ENCODE measurements at regions of chr1 and their contacts with region 1.

Region 1: DNA sequence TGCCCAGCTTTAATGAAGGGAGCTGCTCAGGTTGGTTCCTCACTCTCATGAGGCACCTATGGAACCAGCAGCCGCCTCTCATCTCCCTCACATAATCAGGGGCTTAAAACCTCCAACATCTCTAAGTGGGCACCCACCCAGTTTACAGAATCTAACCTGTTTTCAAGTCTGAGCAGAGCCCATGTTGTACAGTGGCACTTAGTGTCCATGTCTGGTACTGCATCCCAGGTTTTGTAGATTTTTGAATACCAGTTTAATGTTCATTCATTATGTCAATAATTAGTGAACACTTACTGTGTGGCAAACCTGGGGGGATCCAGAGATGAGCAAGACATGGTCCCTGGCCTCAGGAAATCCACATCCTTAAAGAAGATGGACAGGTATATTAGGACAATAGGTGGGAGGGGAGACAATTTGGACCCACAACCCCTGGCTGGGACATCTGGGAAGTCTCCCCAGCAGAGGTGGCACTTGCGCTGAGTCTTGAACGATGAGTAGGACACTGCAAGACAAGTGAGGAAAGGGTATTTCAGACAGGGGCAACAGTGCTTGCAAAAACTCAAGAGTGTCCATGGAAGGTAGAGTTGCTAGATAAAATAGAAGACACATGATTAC is 83.3 kb downstream of the LACTBL1 start:
- H3K4me3 Mint-ChIP-seq: no peak overlapping the region
- H3K27ac Mint-ChIP-seq: no peak overlapping the region
- H3K4me1 Mint-ChIP-seq: peaks cover 19% of the 10 kb centered on the region
- H3K27me3 Mint-ChIP-seq: peaks cover 10% of the 10 kb centered on the region

Region 2: DNA sequence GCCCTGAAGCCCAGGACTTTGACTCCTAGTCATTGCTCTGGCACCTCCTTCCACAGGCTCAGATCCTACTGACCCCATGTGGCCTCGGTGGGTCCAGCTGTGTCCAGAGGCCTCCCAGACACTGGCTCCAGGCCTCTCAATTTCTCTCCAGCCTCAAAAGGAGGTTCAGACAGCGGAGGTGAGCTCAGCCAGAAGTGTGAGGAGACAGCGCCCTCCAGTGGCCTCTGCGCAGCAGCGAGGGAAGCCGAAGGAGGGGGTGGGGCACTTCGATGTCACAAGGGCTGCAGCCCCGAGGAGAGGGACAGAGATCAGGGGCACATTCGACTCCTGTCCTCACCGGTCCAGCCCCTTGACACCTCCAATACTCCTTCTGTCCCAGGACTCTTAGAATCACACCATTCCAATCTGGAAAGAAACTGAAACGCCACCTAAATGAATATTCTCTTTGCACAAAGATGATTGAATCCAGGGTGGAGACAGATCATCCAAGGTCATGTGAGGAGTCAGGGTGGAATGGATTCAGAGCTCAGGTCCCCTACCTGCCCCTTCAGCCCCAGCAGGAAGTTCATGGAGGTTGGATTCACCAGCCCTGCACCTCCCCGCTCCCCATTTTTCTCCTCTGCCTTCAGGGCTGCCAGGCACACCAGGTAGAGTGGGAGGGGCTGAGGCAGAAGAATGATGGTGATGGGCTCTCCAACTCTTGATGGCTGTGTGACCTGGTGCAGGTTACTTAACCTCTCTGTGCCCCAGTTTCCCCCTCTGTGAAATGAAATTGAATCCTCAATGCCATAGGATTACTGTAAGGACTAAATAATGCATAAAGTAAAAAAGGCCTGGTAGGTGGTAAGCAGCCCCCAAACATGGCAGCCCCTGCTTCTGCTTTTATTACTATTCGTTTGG is 472.5 kb before region 1 on chr1:
- intact Hi-C with region 1: loop called (anchors 5 kb)
- H3K4me3 Mint-ChIP-seq: no peak overlapping the region
- H3K27ac Mint-ChIP-seq: no peak overlapping the region
- H3K4me1 Mint-ChIP-seq: no peaks in the 10 kb centered on the region
- H3K27me3 Mint-ChIP-seq: peaks cover 37% of the 10 kb centered on the region

Region 3: DNA sequence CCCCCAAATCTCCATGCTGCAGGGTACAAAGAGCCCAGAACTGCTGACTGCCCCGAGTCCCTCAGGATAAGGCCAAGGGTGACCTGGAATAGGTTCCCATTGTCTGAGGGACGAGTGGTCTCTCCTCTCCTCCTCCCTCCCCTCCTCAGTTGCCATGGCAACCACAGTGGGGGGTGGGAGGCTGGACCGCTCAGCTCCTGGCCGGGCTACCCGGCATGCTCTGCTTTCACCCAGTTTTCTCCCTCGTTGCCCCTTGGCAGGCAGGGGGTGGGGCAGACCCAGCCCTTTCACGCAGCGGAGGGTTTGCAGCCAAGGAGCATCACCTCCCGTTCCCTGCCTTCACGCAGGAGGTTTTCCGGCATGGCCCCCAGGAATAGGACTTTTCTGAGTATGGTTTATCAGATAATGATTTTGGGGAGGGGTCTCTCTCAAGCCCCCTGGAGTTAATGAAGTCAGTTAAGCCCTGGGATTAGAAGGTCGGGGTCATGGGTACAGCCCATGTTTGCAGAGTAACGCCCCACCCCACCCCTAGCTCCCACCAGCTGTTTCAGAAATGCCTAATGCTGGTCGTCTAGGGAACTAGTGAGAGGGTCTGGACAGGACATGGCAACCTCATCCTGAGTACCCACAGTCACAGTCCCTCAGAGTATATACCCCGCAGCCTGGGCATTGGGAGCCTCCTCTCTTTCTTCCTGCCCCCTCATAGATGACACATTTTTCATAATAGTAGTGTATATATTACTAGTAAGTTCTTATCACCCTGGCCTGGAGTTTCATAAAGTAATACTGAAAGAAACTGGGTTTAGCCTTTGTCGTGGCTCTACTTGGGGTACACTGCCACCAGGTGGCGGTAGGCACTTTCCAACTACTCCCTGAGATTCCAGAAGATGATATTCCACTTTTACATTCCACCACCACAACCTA is 215.6 kb before region 1 on chr1:
- intact Hi-C with region 1: loop called (anchors 1 kb)
- H3K4me3 Mint-ChIP-seq: no peak overlapping the region
- H3K27ac Mint-ChIP-seq: no peak overlapping the region
- H3K4me1 Mint-ChIP-seq: peaks cover 4% of the 10 kb centered on the region
- H3K27me3 Mint-ChIP-seq: peaks cover 36% of the 10 kb centered on the region

Region 4: DNA sequence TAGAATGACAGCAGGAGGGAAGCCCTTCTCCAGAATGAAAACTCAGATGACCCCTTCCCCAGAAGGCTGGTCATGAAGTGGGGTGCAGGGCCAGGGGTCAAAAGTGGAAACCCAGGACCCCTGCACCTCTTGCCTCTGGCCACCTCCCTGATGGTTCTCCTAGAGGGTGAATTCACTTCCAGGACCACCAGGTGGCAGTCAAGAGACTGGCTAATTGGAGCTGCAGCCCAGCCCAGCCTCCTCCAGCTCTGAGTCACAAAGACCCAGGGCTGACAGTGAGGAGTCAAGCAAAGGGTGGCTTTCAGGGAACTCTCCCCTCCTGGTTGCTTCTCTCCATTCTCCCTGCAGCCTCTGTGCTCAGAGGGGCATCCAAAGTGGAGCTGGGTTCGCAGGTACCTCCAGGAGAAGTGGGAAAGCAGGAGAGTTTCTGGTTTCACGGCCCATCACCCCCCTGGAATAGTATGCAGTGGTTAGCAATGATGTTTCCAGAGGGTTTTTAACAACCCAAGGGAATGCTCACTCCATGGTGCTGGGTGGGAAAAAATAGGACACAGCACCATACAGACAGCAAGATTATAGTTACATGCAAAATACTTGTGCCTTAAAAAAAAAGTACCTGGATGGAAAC is 184.8 kb before region 1 on chr1:
- intact Hi-C with region 1: loop called (anchors 1 kb)
- H3K4me3 Mint-ChIP-seq: no peak overlapping the region
- H3K27ac Mint-ChIP-seq: no peak overlapping the region
- H3K4me1 Mint-ChIP-seq: peaks cover 45% of the 10 kb centered on the region
- H3K27me3 Mint-ChIP-seq: peaks cover 15% of the 10 kb centered on the region